ENCODE measurements at regions of chr16 and their contacts with region 1.

Region 1: DNA sequence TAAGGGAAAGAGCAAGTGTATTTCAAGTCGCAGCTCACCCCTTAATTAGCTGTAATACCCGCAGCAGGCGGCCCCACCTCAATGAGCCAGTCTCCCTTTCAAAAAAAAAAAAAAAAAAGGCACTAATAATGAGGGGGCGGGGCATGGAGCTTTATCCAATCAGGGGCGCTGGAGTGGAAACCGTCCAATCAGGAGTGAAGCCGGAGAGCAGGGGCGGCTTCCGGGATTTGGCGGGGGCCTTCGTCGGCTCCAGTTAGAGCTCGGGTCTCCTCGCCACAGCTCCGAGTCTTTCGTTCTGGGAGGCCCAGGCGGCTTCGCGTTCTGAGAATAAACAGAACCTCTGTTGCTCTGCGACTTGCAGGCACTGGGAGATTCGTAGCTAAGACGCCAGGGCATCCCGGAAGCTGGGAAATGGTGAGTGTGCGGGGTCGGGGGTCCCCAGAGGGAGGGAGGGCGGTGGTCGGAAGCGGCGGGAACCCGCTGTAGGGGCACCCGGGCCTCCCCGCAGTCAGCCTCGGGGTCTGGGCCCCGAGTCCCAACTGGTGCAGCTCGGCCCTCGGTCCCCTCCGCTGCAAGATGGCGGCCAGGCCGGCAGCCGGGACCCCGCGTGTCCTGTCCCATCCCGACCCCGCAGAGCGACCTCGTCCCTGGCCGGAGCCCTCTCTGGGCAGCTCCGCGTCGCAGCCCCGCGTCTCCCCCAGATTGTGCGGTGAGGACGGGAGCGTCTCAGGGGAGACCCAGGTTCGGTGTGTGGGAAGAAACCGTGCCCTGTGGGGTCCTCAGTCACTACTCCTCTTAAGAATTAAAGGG is at the start of gene ZNF267:
- DNase-seq: peak; percentile 86
- ATAC-seq: peak; percentile 89
- H3K4me3 ChIP-seq: peak within 1 kb of the TSS; percentile 73
- H3K27ac ChIP-seq: peak within 1 kb of the TSS; percentile 58
- H3K4me1 ChIP-seq: peaks cover 20% of the 10 kb centered on the region
- H3K27me3 ChIP-seq: no peaks in the 10 kb centered on the region
- CTCF ChIP-seq: no peak
- POLR2A ChIP-seq: peak; percentile 95
- RAD21 ChIP-seq: no peak
- total RNA-seq, gene ZNF267: 15.6 and 22.2 TPM in 2 replicates

Region 2: DNA sequence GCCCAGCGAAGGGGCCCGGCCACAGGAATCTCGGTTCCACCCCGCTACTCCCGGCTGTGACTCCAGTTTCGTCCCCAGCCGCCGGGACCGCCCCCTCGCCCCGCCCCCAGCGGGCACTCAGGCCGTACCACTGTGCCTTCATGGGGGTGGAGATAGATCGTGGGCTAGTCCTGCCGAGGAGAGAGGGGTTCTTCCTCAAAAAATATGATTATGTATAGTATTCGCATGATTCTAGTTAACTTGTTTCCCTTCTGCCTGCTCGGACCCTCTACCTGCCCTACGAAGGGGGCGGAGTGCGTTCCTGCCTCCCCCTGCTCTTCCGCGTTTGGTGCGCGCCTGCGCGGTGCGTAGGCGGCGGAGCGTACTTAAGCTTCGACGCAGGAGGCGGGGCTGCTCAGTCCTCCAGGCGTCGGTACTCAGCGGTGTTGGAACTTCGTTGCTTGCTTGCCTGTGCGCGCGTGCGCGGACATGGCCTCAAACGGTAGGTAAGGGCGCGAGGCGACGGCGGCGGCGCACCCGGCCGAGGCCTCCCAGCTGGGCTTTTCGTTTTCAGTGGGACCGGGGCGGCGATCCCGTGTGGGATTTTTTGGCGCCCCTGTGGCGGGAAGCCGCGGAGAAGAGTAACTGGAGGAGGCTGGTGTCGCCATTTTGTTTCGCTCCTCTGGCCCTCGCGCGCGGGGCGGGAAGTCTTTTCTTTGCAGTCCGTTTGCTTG is 693.9 kb before region 1 on chr16 and contains the start of gene FUS:
- CTCF ChIA-PET with region 1: no interaction called
- POLR2A ChIA-PET with region 1: no interaction called
- dilution Hi-C with region 1: no loop called
- in situ Hi-C with region 1: no loop called
- intact Hi-C with region 1: loop called (anchors 10 kb)
- DNase-seq: peak; percentile 83
- ATAC-seq: peak; percentile 84
- H3K4me3 ChIP-seq: peak within 1 kb of the TSS; percentile 69
- H3K27ac ChIP-seq: peak within 1 kb of the TSS; percentile 97
- H3K4me1 ChIP-seq: peaks cover 6% of the 10 kb centered on the region; the same call in 1 of the 2 replicates
- H3K27me3 ChIP-seq: no peaks in the 10 kb centered on the region
- CTCF ChIP-seq: no peak
- POLR2A ChIP-seq: peak; percentile 100
- RAD21 ChIP-seq: no peak
- total RNA-seq, gene FUS: 42.8 and 51.9 TPM in 2 replicates

Region 3: GRCh38 chr16:31196324-31197088 is 677.3 kb before region 1 on chr16:
- CTCF ChIA-PET with region 1: no interaction called
- POLR2A ChIA-PET with region 1: interaction called, 4 read pairs
- dilution Hi-C with region 1: no loop called
- in situ Hi-C with region 1: loop called (anchors 10 kb)
- intact Hi-C with region 1: no loop called
- DNase-seq: no peak
- ATAC-seq: no peak
- H3K4me3 ChIP-seq: no peak overlapping the region
- H3K27ac ChIP-seq: no peak overlapping the region
- H3K4me1 ChIP-seq: no peaks in the 10 kb centered on the region
- H3K27me3 ChIP-seq: no peaks in the 10 kb centered on the region
- CTCF ChIP-seq: no peak
- POLR2A ChIP-seq: no peak
- RAD21 ChIP-seq: no peak

Measured in IMR-90 (cell line).